ENCODE measurements at regions of chr10 and their contacts with region 1.

Region 1: DNA sequence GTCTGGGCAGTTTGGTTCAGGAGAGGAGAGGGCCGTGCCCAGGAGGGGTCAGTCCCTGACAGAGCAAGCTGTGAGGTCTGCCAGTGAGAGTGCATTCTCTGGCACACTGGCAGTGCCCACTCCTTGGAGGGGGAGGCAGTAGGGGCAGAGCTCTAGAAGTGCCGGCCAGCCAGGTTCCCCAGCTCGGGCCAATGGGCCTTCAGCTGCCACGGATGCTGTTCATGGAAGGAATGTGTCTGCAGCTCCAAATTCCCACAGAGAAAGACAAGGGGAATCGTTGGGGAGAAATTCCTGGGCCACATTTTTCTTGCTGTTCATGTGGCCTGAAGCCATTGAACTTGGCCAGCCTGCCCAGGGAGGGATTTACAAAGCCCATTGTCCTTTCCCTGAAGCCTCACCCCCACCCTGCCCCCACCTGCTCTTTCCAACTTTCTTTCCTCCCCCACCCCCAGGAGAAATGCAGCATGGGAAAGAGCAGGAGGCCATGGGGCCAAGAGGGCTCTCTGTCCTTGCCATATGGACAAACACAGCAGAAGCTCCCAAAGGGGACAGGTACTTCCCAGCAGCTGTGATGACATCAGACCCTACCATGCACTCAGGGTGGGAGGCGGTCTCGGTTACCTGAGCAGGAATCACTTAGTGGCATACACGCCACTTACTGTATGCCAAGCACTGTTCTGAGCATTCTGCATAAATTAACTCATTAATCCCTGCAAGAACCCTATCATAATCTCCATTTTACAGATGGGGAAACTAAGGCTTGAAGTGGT is 70.7 kb downstream of the ARHGAP22 start:
- DNase-seq: no peak
- H3K4me3 ChIP-seq: no peak overlapping the region
- H3K27ac ChIP-seq: no peak overlapping the region
- H3K4me1 ChIP-seq: no peaks in the 10 kb centered on the region
- H3K27me3 ChIP-seq: no peaks in the 10 kb centered on the region

Region 2: GRCh38 chr10:48523820-48524758 is 10.0 kb before region 1 on chr10:
- CTCF ChIA-PET with region 1: interaction called, 53 read pairs
- POLR2A ChIA-PET with region 1: interaction called, 4 read pairs
- DNase-seq: peak; percentile 66 to 83 (median 73)
- H3K4me3 ChIP-seq: peak overlapping the region; percentile 62 to 84 (median 78)
- H3K27ac ChIP-seq: peak overlapping the region in 1 of 2 experiments; percentile 16
- H3K4me1 ChIP-seq: peaks cover 0 to 47% (median 43%) of the 10 kb centered on the region in 4 experiments
- H3K27me3 ChIP-seq: no peaks in the 10 kb centered on the region

Measured in common myeloid progenitor, CD34-positive (primary cell).